Activated naive CD4-positive, alpha-beta T cell treated with anti-CD3 and anti-CD28 coated beads for 36 hours (primary cell): ENCODE measurements at regions of chr12 and their contacts with region 1.

Region 1: DNA sequence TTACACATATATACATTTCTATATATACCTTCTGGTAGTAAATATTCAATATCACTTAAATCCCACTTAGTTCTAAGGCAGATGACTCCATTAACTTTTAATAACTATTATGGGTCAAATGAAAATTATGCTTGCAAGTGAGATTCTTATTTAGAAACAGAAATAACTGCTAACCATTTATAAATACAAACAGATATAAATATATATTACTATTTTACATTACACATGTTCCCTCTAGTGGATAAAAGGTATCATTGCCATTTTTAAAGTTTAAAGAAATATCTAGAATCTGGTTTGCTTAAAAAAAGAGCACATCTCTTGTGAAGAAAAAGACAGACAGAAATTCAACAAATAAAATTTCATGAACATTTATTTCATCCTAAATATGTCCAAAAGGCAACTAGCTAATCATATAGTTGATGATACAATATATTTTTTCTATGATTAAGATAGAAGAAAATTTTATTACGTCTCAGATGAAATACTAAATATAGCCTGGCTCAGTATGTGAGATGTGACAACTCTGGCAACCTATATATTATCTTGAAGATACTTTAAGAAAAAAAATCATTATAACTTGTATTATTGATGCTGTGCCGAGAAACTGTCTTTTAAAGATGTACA is 11.7 kb upstream of the RAD51AP1 start:
- DNase-seq: no peak
- H3K4me3 Mint-ChIP-seq: no peak overlapping the region
- H3K27ac Mint-ChIP-seq: no peak overlapping the region
- H3K4me1 Mint-ChIP-seq: peaks cover 2% of the 10 kb centered on the region
- H3K27me3 Mint-ChIP-seq: no peaks in the 10 kb centered on the region

Region 2: DNA sequence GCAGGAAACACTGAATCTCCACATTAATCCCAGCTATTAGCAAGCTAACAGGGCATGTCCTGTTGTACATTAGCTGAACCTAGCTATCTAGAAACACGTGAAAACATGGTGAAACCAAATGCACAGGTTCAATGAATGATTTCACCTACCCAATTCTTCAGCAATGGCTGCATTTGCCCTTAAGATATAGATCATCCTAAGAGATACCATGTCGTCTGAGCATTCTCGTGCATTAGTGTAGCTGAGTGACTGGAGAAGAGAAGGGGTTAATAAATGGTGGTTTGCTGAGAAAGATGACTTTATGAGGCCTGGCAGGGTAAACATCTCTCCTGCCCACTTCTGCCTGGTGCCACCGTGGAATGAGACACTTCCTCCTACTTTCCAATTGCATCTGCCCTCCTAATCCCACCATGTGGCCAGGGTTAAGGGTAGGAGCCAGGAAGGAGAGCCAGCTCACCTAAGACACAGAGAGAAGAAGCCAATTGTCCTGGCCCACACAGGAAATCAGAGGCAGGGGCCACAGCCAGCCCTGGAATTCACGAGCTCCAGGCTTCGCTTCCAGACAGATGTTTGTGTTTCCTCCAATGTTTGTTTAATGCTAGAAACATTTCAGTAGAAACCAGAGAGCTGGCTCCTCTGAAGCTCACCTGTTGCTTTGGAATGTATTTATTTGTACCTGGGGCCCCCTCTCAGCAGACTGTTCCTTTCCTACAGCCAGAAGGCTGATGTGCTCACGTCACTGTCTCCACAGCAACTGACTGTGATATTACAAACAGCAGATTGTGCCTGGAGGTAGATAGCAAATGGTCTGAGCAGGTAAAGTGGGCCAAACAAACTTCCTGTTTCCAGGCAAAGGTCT is 527.8 kb before region 1 on chr12:
- CTCF ChIA-PET with region 1: interaction called, 4 read pairs
- intact Hi-C with region 1: loop called (anchors 5 kb)
- DNase-seq: no peak
- H3K4me3 Mint-ChIP-seq: no peak overlapping the region
- H3K27ac Mint-ChIP-seq: no peak overlapping the region
- H3K4me1 Mint-ChIP-seq: peaks cover 5% of the 10 kb centered on the region
- H3K27me3 Mint-ChIP-seq: no peaks in the 10 kb centered on the region

Region 3: GRCh38 chr12:4356041-4356327 is 171.1 kb before region 1 on chr12:
- CTCF ChIA-PET with region 1: no interaction called
- intact Hi-C with region 1: loop called (anchors 1 kb)
- DNase-seq: peak; percentile 85
- H3K4me3 Mint-ChIP-seq: no peak overlapping the region
- H3K27ac Mint-ChIP-seq: peak overlapping the region; percentile 46
- H3K4me1 Mint-ChIP-seq: no peaks in the 10 kb centered on the region
- H3K27me3 Mint-ChIP-seq: no peaks in the 10 kb centered on the region

Region 4: DNA sequence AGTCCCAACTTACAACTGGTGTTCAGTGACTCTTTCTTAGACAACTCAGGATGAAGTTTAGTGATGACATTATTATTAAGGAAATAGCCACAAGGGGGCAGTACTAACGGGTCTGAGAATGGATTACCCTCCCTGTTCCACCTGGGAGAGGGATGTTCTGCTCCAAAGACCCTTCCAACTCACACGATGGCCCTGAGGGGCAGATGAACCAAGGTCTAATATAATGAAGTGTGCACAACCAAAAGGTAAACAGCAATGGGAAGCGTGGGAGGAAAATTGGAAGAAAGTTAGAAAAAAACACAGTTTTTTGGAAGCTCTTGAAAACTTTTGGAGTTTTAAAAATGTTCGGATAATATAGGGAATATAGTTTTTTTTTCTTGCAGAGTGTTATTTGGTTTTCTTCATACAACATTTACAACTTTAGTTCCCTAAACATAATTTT is 105.4 kb before region 1 on chr12:
- CTCF ChIA-PET with region 1: interaction called, 54 read pairs
- intact Hi-C with region 1: loop called (anchors 1 kb)
- DNase-seq: peak; percentile 31
- H3K4me3 Mint-ChIP-seq: no peak overlapping the region
- H3K27ac Mint-ChIP-seq: no peak overlapping the region
- H3K4me1 Mint-ChIP-seq: no peaks in the 10 kb centered on the region
- H3K27me3 Mint-ChIP-seq: peaks cover 4% of the 10 kb centered on the region

Region 5: GRCh38 chr12:4496145-4496838 is 30.7 kb before region 1 on chr12:
- CTCF ChIA-PET with region 1: no interaction called
- intact Hi-C with region 1: no loop called
- DNase-seq: no peak
- H3K4me3 Mint-ChIP-seq: no peak overlapping the region
- H3K27ac Mint-ChIP-seq: no peak overlapping the region
- H3K4me1 Mint-ChIP-seq: peaks cover 14% of the 10 kb centered on the region
- H3K27me3 Mint-ChIP-seq: no peaks in the 10 kb centered on the region

Region 6: GRCh38 chr12:4567073-4567881 is 40.2 kb after region 1 on chr12:
- CTCF ChIA-PET with region 1: no interaction called
- intact Hi-C with region 1: no loop called
- DNase-seq: no peak
- H3K4me3 Mint-ChIP-seq: no peak overlapping the region
- H3K27ac Mint-ChIP-seq: no peak overlapping the region
- H3K4me1 Mint-ChIP-seq: peaks cover 10% of the 10 kb centered on the region
- H3K27me3 Mint-ChIP-seq: peaks cover 24% of the 10 kb centered on the region